ENCODE measurements at regions of chr11 and their contacts with region 1.

Region 1: DNA sequence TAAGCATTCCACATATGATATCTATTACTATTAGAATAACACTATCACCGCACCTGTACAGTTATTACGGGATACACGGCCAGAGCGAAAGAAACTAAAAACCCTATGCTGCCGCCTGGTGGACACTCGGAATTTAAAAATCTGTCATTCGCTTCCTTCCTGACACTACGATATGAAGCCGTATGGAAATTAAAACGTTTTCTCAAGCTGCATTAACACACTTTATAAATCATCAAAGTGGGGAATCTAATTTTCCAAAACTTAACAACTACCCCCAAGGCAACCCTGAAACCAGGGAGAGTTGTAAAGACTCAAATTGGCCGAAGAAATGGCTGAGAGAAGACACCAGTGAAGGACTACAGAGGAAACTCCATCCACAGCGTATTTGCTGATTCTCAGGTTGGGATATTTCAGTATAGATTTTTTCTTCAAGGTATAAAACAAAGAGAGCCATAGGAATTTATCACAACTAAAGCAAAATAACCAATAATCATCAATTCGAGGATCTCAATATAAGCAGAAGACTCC is 1.4 kb downstream of the CCDC73 start:
- DNase-seq: peak in 3 of 5 donors; percentile 28 to 59 (median 37)
- ATAC-seq: peak in 3 of 4 donors; percentile 52 to 72 (median 62)
- H3K4me3 ChIP-seq: peak overlapping the region in 2 of 12 donors; percentile 21 to 29
- H3K27ac ChIP-seq: no peak overlapping the region
- H3K4me1 ChIP-seq: peaks cover 0 to 7% (median 0%) of the 10 kb centered on the region in 12 donors
- H3K27me3 ChIP-seq: peaks cover 0 to 18% (median 0%) of the 10 kb centered on the region in 9 donors
- CTCF ChIP-seq: peak; percentile 55 to 78 (median 66)
- POLR2A ChIP-seq: no peak

Region 2: GRCh38 chr11:32137263-32137662 is 655.7 kb before region 1 on chr11:
- intact Hi-C with region 1: no loop called
- DNase-seq: no peak
- ATAC-seq: peak in 2 of 4 donors; percentile 71 to 81
- H3K4me3 ChIP-seq: no peak overlapping the region
- H3K27ac ChIP-seq: peak overlapping the region in 1 of 12 donors; percentile 21
- H3K4me1 ChIP-seq: peaks cover 0 to 7% (median 0%) of the 10 kb centered on the region in 12 donors
- H3K27me3 ChIP-seq: no peaks in the 10 kb centered on the region
- CTCF ChIP-seq: no peak
- POLR2A ChIP-seq: no peak

Region 3: DNA sequence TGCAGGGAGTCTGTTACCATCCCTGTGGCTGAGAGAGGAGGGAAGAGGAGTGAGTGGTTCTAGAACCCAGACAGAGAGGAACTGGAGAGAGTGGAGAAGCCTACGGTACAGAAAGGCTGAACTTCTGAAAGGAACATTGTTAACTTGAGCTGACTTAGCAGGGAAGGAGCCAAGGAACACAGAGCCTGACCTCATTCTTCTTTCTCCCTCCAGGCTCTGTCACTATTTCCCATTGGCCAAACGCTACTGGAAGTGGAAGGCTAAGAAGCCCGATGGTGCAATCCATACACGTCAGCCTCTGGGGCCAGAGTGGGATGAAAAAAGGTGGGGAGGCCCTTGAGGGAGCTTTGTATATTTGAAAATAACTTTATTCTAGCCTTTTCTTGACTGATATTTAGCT is 341.2 kb before region 1 on chr11:
- intact Hi-C with region 1: loop called in 1 of 10 experiments (anchors 10 kb)
- DNase-seq: peak in 2 of 5 donors; percentile 70 to 75
- ATAC-seq: peak; percentile 79 to 96 (median 88)
- H3K4me3 ChIP-seq: no peak overlapping the region
- H3K27ac ChIP-seq: peak overlapping the region in 5 of 12 donors; percentile 10 to 62 (median 38)
- H3K4me1 ChIP-seq: peaks cover 0 to 6% (median 0%) of the 10 kb centered on the region in 12 donors
- H3K27me3 ChIP-seq: no peaks in the 10 kb centered on the region
- CTCF ChIP-seq: no peak
- POLR2A ChIP-seq: no peak

Region 4: GRCh38 chr11:32583459-32584271 is 209.3 kb before region 1 on chr11 and contains the start of gene EIF3M:
- intact Hi-C with region 1: loop called in 1 of 10 experiments (anchors 10 kb)
- DNase-seq: peak; percentile 97 to 99 (median 97)
- ATAC-seq: peak; percentile 100
- H3K4me3 ChIP-seq: peak within 1 kb of the TSS; percentile 60 to 96 (median 87)
- H3K27ac ChIP-seq: peak within 1 kb of the TSS; percentile 5 to 88 (median 82)
- H3K4me1 ChIP-seq: peaks cover 0 to 44% (median 25%) of the 10 kb centered on the region in 12 donors
- H3K27me3 ChIP-seq: peaks cover 0 to 7% (median 0%) of the 10 kb centered on the region in 9 donors
- CTCF ChIP-seq: peak in 1 of 12 donors; percentile 20
- POLR2A ChIP-seq: peak in 1 of 2 donors; percentile 50
- total RNA-seq, gene EIF3M: 143 to 269 (median 172) TPM

Region 5: GRCh38 chr11:32713496-32713895 is 79.5 kb before region 1 on chr11:
- intact Hi-C with region 1: loop called in 2 of 10 experiments (anchors 5 to 10 kb)
- DNase-seq: no peak
- ATAC-seq: no peak
- H3K4me3 ChIP-seq: no peak overlapping the region
- H3K27ac ChIP-seq: no peak overlapping the region
- H3K4me1 ChIP-seq: no peaks in the 10 kb centered on the region
- H3K27me3 ChIP-seq: peaks cover 0 to 5% (median 0%) of the 10 kb centered on the region in 9 donors
- CTCF ChIP-seq: peak in 5 of 12 donors; percentile 23 to 41 (median 27)
- POLR2A ChIP-seq: no peak

Region 6: GRCh38 chr11:32858731-32859130 is 65.7 kb after region 1 on chr11:
- intact Hi-C with region 1: no loop called
- DNase-seq: no peak
- ATAC-seq: no peak
- H3K4me3 ChIP-seq: no peak overlapping the region
- H3K27ac ChIP-seq: no peak overlapping the region
- H3K4me1 ChIP-seq: no peaks in the 10 kb centered on the region
- H3K27me3 ChIP-seq: peaks cover 0 to 9% (median 0%) of the 10 kb centered on the region in 9 donors
- CTCF ChIP-seq: no peak
- POLR2A ChIP-seq: no peak

Region 7: GRCh38 chr11:33021937-33022336 is 228.9 kb after region 1 on chr11:
- intact Hi-C with region 1: no loop called
- DNase-seq: no peak
- ATAC-seq: no peak
- H3K4me3 ChIP-seq: no peak overlapping the region
- H3K27ac ChIP-seq: no peak overlapping the region
- H3K4me1 ChIP-seq: peaks cover 0 to 3% (median 0%) of the 10 kb centered on the region in 12 donors
- H3K27me3 ChIP-seq: peaks cover 0 to 29% (median 12%) of the 10 kb centered on the region in 9 donors
- CTCF ChIP-seq: no peak
- POLR2A ChIP-seq: no peak

Region 8: GRCh38 chr11:33344611-33345010 is 551.6 kb after region 1 on chr11:
- intact Hi-C with region 1: no loop called
- DNase-seq: no peak
- ATAC-seq: peak in 3 of 4 donors; percentile 46 to 73 (median 63)
- H3K4me3 ChIP-seq: no peak overlapping the region
- H3K27ac ChIP-seq: no peak overlapping the region
- H3K4me1 ChIP-seq: peaks cover 0 to 10% (median 0%) of the 10 kb centered on the region in 12 donors
- H3K27me3 ChIP-seq: no peaks in the 10 kb centered on the region
- CTCF ChIP-seq: peak in 6 of 12 donors; percentile 9 to 41 (median 22)
- POLR2A ChIP-seq: no peak